PC-9 (cell line): ENCODE measurements at regions of chr4 and their contacts with region 1.

Region 1: DNA sequence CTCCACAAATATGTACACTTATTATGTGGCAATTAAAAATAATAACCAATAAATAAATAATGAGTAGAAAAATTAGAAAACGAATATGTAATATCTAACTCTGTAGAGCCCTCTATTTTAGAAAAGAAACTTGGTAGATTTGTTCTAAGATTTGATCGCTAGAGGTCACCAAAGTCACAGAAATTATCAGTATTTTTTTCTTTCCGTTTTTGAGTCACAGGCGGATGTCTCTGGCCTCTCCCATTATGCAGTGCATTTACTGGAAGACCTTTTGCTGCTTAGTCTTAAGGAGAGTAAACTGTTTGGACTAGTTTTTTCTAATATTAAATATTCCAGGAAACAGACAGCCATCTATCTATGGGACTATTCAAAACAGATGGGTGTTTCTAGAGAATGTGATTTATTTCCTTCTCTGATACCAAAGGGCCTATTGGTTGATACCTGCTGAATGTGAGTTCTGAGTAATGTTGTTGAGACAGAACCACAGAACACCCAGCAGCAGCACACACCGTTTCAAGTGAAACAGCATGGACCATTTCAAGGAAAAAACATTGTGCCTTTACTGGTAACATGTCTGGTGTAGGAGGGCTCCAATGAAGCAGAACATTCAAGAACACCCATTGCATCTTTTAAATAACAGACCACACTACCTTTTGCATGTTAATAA is 34.0 kb upstream of the GYPA start:
- DNase-seq: peak; percentile 4 to 34
- H3K4me3 ChIP-seq: no peak overlapping the region
- H3K27ac ChIP-seq: no peak overlapping the region
- H3K4me1 ChIP-seq: no peaks in the 10 kb centered on the region
- H3K27me3 ChIP-seq: 0 out of 2 replicates have a peak, but pooled peaks cover 2% of the 10 kb centered on the region
- CTCF ChIP-seq: peak; percentile 54

Region 2: DNA sequence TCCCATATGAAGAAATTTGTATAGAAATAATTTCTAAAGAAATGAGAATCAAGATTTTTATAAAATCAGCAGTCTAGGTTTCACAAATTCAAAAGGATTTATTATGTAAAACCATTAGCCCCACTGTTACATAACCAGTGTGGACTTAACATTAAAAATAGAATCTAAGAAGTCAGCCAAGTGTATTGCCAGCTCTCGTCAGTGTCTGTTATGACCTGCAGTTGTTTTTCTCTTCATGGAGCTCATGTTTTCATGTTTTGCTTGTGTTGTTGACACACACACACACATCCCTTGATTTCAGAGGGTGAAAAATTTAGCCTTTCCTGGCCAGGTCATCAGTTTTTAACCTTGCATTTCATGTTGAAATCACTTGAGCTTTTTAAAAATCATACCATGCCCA is 950.3 kb before region 1 on chr4:
- CTCF ChIA-PET with region 1: no interaction called
- POLR2A ChIA-PET with region 1: no interaction called
- intact Hi-C with region 1: no loop called
- DNase-seq: no peak
- H3K4me3 ChIP-seq: no peak overlapping the region
- H3K27ac ChIP-seq: no peak overlapping the region
- H3K4me1 ChIP-seq: no peaks in the 10 kb centered on the region
- H3K27me3 ChIP-seq: no peaks in the 10 kb centered on the region
- CTCF ChIP-seq: no peak

Region 3: DNA sequence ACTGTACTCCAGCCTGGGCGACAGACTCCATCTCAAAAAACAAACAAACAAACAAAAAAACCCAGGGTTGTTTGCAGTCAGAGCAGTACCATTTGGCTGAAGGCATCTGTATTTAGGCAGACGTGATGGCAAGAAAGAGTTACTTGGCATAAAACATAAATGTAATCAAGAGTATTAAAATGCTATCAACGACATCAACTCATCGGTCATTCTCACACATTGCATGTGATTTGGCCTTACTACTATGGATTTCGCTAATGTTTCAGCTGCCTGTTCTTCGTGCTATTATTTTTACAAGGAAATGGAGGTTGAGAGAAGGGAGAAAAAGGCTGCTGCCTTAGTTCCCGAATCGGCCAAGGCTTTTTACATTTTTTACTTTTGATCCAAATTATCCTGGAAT is 676.5 kb before region 1 on chr4:
- CTCF ChIA-PET with region 1: no interaction called
- POLR2A ChIA-PET with region 1: no interaction called
- intact Hi-C with region 1: no loop called
- DNase-seq: no peak
- H3K4me3 ChIP-seq: no peak overlapping the region
- H3K27ac ChIP-seq: no peak overlapping the region
- H3K4me1 ChIP-seq: no peaks in the 10 kb centered on the region
- H3K27me3 ChIP-seq: no peaks in the 10 kb centered on the region
- CTCF ChIP-seq: no peak

Region 4: DNA sequence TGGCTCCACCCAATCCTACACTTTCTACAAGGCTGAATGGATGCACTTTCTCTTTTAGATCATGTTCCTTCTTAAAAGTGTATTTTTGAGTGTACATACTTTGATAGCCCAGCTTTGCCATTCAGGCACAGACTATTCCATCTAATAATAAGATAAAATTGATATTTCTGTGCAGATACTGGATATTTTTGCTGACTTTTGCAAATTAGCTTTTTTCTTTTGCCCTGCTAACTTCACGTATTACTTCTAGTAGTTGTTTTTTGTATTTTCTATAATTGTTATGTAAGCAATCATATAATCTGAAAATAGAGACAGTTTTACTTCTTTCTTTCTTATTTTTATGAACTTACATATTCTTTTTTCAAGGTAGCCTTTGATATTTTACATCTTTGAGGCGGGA is 20.5 kb before region 1 on chr4:
- CTCF ChIA-PET with region 1: no interaction called
- POLR2A ChIA-PET with region 1: no interaction called
- intact Hi-C with region 1: no loop called
- DNase-seq: no peak
- H3K4me3 ChIP-seq: no peak overlapping the region
- H3K27ac ChIP-seq: no peak overlapping the region
- H3K4me1 ChIP-seq: no peaks in the 10 kb centered on the region
- H3K27me3 ChIP-seq: no peaks in the 10 kb centered on the region
- CTCF ChIP-seq: no peak

Region 5: GRCh38 chr4:144338148-144338547 is 163.6 kb after region 1 on chr4:
- CTCF ChIA-PET with region 1: no interaction called
- POLR2A ChIA-PET with region 1: no interaction called
- intact Hi-C with region 1: loop called (anchors 5 kb)
- DNase-seq: no peak
- H3K4me3 ChIP-seq: no peak overlapping the region
- H3K27ac ChIP-seq: peak overlapping the region; percentile 74
- H3K4me1 ChIP-seq: peaks cover 6% of the 10 kb centered on the region; the same call in 1 of the 2 replicates
- H3K27me3 ChIP-seq: no peaks in the 10 kb centered on the region
- CTCF ChIP-seq: no peak

Region 6: DNA sequence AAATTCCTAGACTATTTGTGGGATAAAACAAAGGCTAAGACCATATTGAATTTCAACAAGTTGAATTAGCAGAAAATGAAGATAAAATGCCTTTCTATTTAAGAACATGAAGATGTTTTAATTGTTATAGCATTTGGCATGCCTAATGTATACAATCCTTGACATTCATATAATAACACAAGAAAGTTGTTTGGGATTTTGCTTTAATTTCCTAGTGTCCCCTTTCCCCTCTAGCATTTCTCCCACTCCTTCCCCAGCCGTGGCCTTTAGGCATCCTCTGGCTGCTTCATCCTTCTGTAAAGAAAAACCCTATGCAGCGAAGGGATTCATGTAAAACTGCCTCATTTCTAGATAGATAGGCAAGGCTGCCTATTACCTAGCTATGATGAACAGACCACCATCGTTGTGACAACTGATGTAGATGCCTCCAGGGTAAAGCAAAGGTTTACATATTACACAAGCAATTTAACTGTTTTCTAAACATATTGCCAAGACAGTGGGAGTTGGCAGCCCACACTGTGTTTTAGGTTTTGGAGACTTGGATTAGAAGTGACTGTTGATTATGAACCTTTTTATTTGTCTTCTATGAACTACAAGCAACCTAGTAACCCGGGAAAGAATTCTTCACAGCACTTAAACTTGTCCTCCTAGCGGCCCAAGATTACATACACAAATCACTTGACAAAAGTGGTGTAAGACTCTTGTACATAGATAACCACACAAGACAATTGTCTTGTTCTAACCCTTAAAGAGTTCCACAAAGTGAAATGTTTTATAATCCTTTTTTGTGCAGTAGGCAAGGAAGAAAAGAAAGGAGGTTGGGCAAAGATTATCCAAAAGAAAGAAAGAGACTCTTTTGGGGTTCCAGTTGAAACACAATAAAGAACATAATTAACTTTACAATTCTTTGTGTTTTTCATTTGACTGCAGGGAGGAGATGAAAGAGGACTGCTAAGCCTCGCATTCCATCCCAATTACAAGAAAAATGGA is 531.4 kb after region 1 on chr4:
- CTCF ChIA-PET with region 1: interaction called, 13 read pairs
- POLR2A ChIA-PET with region 1: no interaction called
- intact Hi-C with region 1: no loop called
- DNase-seq: no peak
- H3K4me3 ChIP-seq: no peak overlapping the region
- H3K27ac ChIP-seq: no peak overlapping the region
- H3K4me1 ChIP-seq: no peaks in the 10 kb centered on the region
- H3K27me3 ChIP-seq: no peaks in the 10 kb centered on the region
- CTCF ChIP-seq: no peak

Region 7: GRCh38 chr4:144754562-144755410 is 580.3 kb after region 1 on chr4:
- CTCF ChIA-PET with region 1: no interaction called
- POLR2A ChIA-PET with region 1: no interaction called
- intact Hi-C with region 1: loop called (anchors 5 kb)
- DNase-seq: no peak
- H3K4me3 ChIP-seq: no peak overlapping the region
- H3K27ac ChIP-seq: no peak overlapping the region
- H3K4me1 ChIP-seq: no peaks in the 10 kb centered on the region
- H3K27me3 ChIP-seq: no peaks in the 10 kb centered on the region
- CTCF ChIP-seq: no peak

Region 8: GRCh38 chr4:144787365-144788258 is 613.1 kb after region 1 on chr4:
- CTCF ChIA-PET with region 1: no interaction called
- POLR2A ChIA-PET with region 1: no interaction called
- intact Hi-C with region 1: loop called (anchors 10 kb)
- DNase-seq: no peak
- H3K4me3 ChIP-seq: no peak overlapping the region
- H3K27ac ChIP-seq: no peak overlapping the region
- H3K4me1 ChIP-seq: no peaks in the 10 kb centered on the region
- H3K27me3 ChIP-seq: no peaks in the 10 kb centered on the region
- CTCF ChIP-seq: peak; percentile 58

Region 9: GRCh38 chr4:145061318-145061920 is 886.9 kb after region 1 on chr4:
- CTCF ChIA-PET with region 1: no interaction called
- POLR2A ChIA-PET with region 1: no interaction called
- intact Hi-C with region 1: loop called (anchors 1 kb)
- DNase-seq: no peak
- H3K4me3 ChIP-seq: no peak overlapping the region
- H3K27ac ChIP-seq: no peak overlapping the region
- H3K4me1 ChIP-seq: peaks cover 5% of the 10 kb centered on the region; the same call in 1 of the 2 replicates
- H3K27me3 ChIP-seq: no peaks in the 10 kb centered on the region
- CTCF ChIP-seq: peak; percentile 66